Activated naive CD4-positive, alpha-beta T cell treated with anti-CD3 and anti-CD28 coated beads for 36 hours (primary cell): ENCODE measurements at regions of chr3 and their contacts with region 1.

Region 1: GRCh38 chr3:49411968-49412631 is at the starts of genes RHOA and TCTA:
- DNase-seq: peak; percentile 99
- H3K4me3 Mint-ChIP-seq: peak within 1 kb of the TSS; percentile 94
- H3K27ac Mint-ChIP-seq: peak within 1 kb of the TSS; percentile 92
- H3K4me1 Mint-ChIP-seq: peaks cover 65% of the 10 kb centered on the region
- H3K27me3 Mint-ChIP-seq: no peaks in the 10 kb centered on the region
- total RNA-seq, gene RHOA: 463 to 491 TPM
- total RNA-seq, gene TCTA: 9.4 to 9.5 TPM

Region 2: GRCh38 chr3:49028673-49029562 is 383.2 kb before region 1 on chr3 and contains the start of gene IMPDH2:
- CTCF ChIA-PET with region 1: no interaction called
- intact Hi-C with region 1: loop called (anchors 1 kb)
- DNase-seq: peak; percentile 94
- H3K4me3 Mint-ChIP-seq: peak within 1 kb of the TSS; percentile 91
- H3K27ac Mint-ChIP-seq: peak within 1 kb of the TSS; percentile 89
- H3K4me1 Mint-ChIP-seq: peaks cover 53% of the 10 kb centered on the region
- H3K27me3 Mint-ChIP-seq: no peaks in the 10 kb centered on the region
- total RNA-seq, gene IMPDH2: 565 to 593 TPM

Region 3: DNA sequence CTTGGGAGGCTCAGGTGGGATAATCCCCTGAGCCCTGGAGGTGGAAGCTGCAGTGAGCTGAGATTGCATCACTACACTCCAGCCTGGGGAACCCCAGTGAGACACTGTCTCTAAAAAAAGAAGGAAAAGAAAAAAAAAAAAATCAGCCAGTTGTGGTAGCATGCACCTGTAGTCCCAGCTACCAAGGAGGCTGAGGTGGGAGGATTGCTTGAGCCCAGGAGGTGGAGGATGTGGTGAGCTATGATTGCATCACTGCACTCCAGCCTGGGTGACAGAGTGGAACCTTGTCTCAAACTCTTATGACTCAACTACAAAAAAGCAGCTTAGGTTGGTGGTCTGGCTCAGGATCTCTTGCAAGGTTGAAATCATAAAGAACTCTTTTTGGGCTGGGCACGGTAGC is 34.6 kb before region 1 on chr3:
- CTCF ChIA-PET with region 1: no interaction called
- intact Hi-C with region 1: loop called (anchors 1 kb)
- DNase-seq: peak; percentile 89
- H3K4me3 Mint-ChIP-seq: no peak overlapping the region
- H3K27ac Mint-ChIP-seq: peak overlapping the region; percentile 87
- H3K4me1 Mint-ChIP-seq: peaks cover 43% of the 10 kb centered on the region
- H3K27me3 Mint-ChIP-seq: no peaks in the 10 kb centered on the region

Region 4: GRCh38 chr3:49445381-49445780 is 33.3 kb after region 1 on chr3:
- CTCF ChIA-PET with region 1: interaction called, 23 read pairs
- intact Hi-C with region 1: loop called (anchors 1 kb)
- DNase-seq: no peak
- H3K4me3 Mint-ChIP-seq: no peak overlapping the region
- H3K27ac Mint-ChIP-seq: no peak overlapping the region
- H3K4me1 Mint-ChIP-seq: peaks cover 15% of the 10 kb centered on the region
- H3K27me3 Mint-ChIP-seq: no peaks in the 10 kb centered on the region

Region 5: GRCh38 chr3:49469936-49470713 is 58.0 kb after region 1 on chr3 and contains the start of gene DAG1:
- CTCF ChIA-PET with region 1: no interaction called
- intact Hi-C with region 1: loop called (anchors 1 kb)
- DNase-seq: peak; percentile 97
- H3K4me3 Mint-ChIP-seq: peak within 1 kb of the TSS; percentile 83
- H3K27ac Mint-ChIP-seq: peak within 1 kb of the TSS; percentile 85
- H3K4me1 Mint-ChIP-seq: peaks cover 14% of the 10 kb centered on the region
- H3K27me3 Mint-ChIP-seq: no peaks in the 10 kb centered on the region
- total RNA-seq, gene DAG1: 6.9 to 8.2 TPM

Region 6: GRCh38 chr3:49723628-49724551 is 311.8 kb after region 1 on chr3 and contains the start of gene GMPPB:
- CTCF ChIA-PET with region 1: no interaction called
- intact Hi-C with region 1: loop called (anchors 5 kb)
- DNase-seq: peak; percentile 96
- H3K4me3 Mint-ChIP-seq: peak within 1 kb of the TSS; percentile 96
- H3K27ac Mint-ChIP-seq: peak within 1 kb of the TSS; percentile 95
- H3K4me1 Mint-ChIP-seq: peaks cover 33% of the 10 kb centered on the region
- H3K27me3 Mint-ChIP-seq: no peaks in the 10 kb centered on the region
- total RNA-seq, gene GMPPB: 25.6 to 27.4 TPM